CD4-positive, alpha-beta memory T cell (primary cell): ENCODE measurements at regions of chr12 and their contacts with region 1.

Region 1: DNA sequence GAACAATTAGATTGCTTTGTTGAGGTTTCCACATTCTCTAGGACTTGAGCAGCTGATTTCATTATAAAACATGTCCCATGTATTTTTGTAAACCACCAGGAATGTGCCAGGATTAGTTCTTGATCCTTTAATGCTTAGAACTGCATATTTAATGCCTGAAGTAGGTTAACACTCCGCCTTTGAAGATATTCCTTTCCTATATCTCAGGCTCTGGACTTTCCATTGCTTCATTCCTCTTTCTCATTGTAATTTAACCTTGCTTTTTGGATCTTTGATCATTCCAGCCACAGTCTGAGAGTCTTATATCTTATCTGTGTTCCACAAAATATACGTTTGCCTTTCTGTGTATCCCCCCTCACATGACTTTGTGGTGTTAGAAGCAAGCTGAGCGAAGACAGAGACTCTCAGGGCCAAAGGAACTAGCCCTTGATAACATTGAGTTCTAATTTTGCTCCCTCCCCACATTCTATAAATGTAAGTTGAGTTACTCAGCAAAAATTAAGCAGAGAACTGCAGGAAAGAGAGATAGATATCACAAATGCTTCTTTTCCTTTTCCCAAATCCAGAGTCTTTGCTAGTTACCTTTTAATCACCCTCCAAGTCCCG is 2.4 kb upstream of the CLEC1B start:
- DNase-seq: no peak
- H3K4me3 ChIP-seq: no peak overlapping the region
- H3K4me3 Mint-ChIP-seq: no peak overlapping the region
- H3K27ac ChIP-seq: no peak overlapping the region
- H3K27ac Mint-ChIP-seq: no peak overlapping the region
- H3K4me1 ChIP-seq: no peaks in the 10 kb centered on the region
- H3K4me1 Mint-ChIP-seq: no peaks in the 10 kb centered on the region
- H3K27me3 ChIP-seq: no peaks in the 10 kb centered on the region
- H3K27me3 Mint-ChIP-seq: peaks cover 2 to 15% of the 10 kb centered on the region in 2 donors

Region 2: GRCh38 chr12:9707864-9708808 is 293.1 kb before region 1 on chr12:
- CTCF ChIA-PET with region 1: no interaction called
- POLR2A ChIA-PET with region 1: no interaction called
- intact Hi-C with region 1: no loop called
- DNase-seq: peak; percentile 72 to 75 (median 74)
- H3K4me3 ChIP-seq: peak overlapping the region; percentile 4 to 29
- H3K4me3 Mint-ChIP-seq: peak overlapping the region; percentile 60 to 82 (median 77)
- H3K27ac ChIP-seq: peak overlapping the region; percentile 66
- H3K27ac Mint-ChIP-seq: peak overlapping the region; percentile 87 to 97 (median 96)
- H3K4me1 ChIP-seq: peaks cover 44% of the 10 kb centered on the region
- H3K4me1 Mint-ChIP-seq: peaks cover 47 to 59% (median 49%) of the 10 kb centered on the region in 4 donors
- H3K27me3 ChIP-seq: no peaks in the 10 kb centered on the region
- H3K27me3 Mint-ChIP-seq: no peaks in the 10 kb centered on the region

Region 3: DNA sequence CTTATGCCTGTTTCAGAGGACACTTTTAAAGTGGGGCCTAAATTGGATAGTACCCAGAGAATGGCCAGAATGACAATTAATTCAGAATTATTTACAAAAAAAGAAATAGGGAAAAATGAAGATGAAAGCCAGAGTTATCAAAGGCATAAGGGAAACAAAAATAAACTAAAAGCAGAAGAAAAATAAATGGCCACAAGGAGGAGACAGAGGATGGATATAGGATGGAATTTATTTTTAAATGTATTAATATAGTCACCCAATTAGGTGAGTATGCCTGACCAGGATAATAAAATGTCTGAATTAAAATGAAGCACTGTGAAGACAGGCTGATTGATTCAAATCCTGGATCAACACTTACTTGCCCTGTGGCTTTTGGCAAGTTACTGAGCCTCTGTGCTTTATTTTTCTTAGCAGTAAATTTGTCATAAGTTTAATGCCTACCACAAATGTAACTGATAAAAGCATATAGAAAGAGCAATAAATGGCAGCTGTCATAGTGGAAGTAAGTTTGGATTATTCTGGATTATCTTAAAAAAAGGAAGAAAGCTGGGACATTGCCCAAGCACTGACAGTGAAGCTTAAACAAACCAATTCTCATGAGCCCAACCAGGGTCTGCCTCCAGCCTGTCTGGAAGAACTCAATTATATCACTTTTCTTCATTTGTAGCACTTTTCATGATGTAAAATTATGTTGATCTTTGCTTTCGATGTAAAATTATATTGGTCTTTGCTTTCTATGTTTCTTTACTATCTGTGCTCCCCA is 32.7 kb after region 1 on chr12:
- CTCF ChIA-PET with region 1: no interaction called
- POLR2A ChIA-PET with region 1: no interaction called
- intact Hi-C with region 1: loop called (anchors 2 kb)
- DNase-seq: no peak
- H3K4me3 ChIP-seq: no peak overlapping the region
- H3K4me3 Mint-ChIP-seq: no peak overlapping the region
- H3K27ac ChIP-seq: no peak overlapping the region
- H3K27ac Mint-ChIP-seq: no peak overlapping the region
- H3K4me1 ChIP-seq: no peaks in the 10 kb centered on the region
- H3K4me1 Mint-ChIP-seq: no peaks in the 10 kb centered on the region
- H3K27me3 ChIP-seq: no peaks in the 10 kb centered on the region
- H3K27me3 Mint-ChIP-seq: peaks cover 7 to 13% of the 10 kb centered on the region in 2 donors